Mammary epithelial cell (primary cell): ENCODE measurements at regions of chr3 and their contacts with region 1.

Region 1: GRCh38 chr3:115814778-115815380 is 191.6 kb downstream of the GAP43 start:
- DNase-seq: peak; percentile 60
- H3K4me3 ChIP-seq: no peak overlapping the region
- H3K27ac ChIP-seq: peak overlapping the region; percentile 15
- H3K4me1 ChIP-seq: peaks cover 3% of the 10 kb centered on the region
- H3K27me3 ChIP-seq: no peaks in the 10 kb centered on the region
- CTCF ChIP-seq: peak; percentile 79 to 90

Region 2: DNA sequence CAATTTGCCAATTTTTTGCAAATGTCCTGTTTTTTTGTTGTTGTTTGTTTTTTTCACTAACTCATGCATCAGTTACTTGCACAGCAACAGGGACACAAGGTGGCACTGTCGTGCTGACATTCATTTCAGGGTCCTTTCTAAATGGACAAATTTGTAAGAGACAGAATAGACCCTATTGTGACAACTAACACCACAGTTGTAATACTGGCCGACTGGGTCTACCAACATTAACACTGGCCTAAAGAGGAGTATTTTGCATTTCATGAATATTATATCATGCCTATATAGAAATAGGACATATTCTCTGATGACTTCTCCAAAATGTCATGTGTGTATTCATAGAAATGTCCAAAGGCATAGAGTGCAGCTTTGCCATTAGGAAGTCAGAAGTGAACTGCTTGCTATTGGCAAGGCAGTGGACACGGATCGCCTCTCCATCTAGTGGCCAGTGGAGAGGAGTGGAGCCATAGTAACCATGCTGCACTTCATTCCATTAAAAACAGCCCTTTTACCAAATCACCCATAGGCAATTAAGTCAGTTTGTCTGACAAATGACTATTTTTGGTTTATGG is 722.6 kb before region 1 on chr3:
- CTCF ChIA-PET with region 1: no interaction called
- dilution Hi-C with region 1: no loop called
- in situ Hi-C with region 1: no loop called
- intact Hi-C with region 1: loop called (anchors 1 kb)
- DNase-seq: peak; percentile 39
- H3K4me3 ChIP-seq: no peak overlapping the region
- H3K27ac ChIP-seq: no peak overlapping the region
- H3K4me1 ChIP-seq: peaks cover under 1% of the 10 kb centered on the region
- H3K27me3 ChIP-seq: no peaks in the 10 kb centered on the region
- CTCF ChIP-seq: peak; percentile 68 to 79

Region 3: DNA sequence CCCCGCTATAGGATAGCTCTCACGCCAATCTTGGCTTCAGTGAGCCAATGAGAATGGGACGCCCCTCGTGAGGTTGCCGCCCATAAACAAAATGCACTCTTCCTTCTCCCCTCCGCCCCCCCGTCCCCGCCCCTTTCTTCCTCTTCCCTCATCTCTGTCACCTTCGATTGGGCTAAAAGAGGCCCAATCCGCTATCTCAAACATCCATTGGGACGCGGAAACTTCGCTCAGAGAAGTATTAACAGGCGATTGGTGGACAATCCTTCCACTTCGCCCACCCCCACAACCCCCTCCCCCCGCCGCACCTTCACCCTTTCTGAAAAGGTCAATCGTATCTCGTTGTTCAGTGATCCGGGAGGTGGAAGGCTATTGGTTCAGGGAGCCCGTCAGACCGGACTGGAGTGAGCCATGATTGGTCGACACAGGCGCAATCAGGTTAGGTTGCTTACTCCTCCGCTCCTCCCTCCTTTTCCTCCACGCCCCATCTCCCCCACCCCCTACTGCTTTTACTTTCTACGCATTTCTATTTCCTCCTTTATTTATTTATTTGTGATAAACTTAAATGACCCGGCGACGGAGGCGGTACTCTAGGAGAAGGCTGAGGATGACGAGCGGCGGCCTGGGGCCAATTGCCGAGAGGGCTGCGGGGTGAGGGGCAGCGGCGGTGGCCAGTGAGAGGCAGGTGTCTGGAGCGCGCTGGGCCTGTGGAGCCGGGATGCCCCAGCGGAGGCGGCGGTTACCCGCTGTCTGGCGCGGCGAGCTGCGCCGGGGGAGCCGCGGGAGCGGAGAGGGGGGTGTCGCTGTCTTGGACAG is 667.3 kb before region 1 on chr3:
- CTCF ChIA-PET with region 1: no interaction called
- dilution Hi-C with region 1: no loop called
- in situ Hi-C with region 1: no loop called
- intact Hi-C with region 1: loop called (anchors 2 kb)
- DNase-seq: peak; percentile 100
- H3K4me3 ChIP-seq: peak overlapping the region; percentile 67 to 87 (median 74)
- H3K27ac ChIP-seq: peak overlapping the region; percentile 74
- H3K4me1 ChIP-seq: peaks cover 13% of the 10 kb centered on the region
- H3K27me3 ChIP-seq: no peaks in the 10 kb centered on the region
- CTCF ChIP-seq: no peak

Region 4: GRCh38 chr3:115217678-115218451 is 597.0 kb before region 1 on chr3:
- CTCF ChIA-PET with region 1: interaction called, 3 read pairs
- dilution Hi-C with region 1: no loop called
- in situ Hi-C with region 1: loop called (anchors 10 to 25 kb)
- intact Hi-C with region 1: loop called (anchors 1 kb)
- DNase-seq: peak; percentile 56
- H3K4me3 ChIP-seq: no peak overlapping the region
- H3K27ac ChIP-seq: no peak overlapping the region
- H3K4me1 ChIP-seq: no peaks in the 10 kb centered on the region
- H3K27me3 ChIP-seq: no peaks in the 10 kb centered on the region
- CTCF ChIP-seq: peak; percentile 72

Region 5: DNA sequence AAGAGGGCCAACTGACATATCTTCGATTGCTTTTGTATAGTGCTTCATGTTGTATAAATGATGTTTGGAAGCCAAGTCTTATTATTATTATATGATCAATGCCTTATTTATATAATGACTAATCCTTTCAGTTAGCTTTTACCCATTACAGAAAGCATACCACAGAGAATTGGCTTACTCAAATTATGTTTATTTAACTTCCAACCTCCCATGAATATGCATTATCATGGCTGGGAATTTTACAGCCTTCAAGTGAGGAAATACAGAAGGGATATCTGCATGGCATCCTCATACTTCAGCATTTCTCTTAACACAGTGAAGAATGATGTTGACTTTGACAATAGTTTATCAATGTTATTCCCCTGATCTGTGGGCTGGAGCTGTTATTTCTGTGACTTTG is 417.4 kb before region 1 on chr3:
- CTCF ChIA-PET with region 1: no interaction called
- dilution Hi-C with region 1: no loop called
- in situ Hi-C with region 1: no loop called
- intact Hi-C with region 1: no loop called
- DNase-seq: peak; percentile 8
- H3K4me3 ChIP-seq: no peak overlapping the region
- H3K27ac ChIP-seq: no peak overlapping the region
- H3K4me1 ChIP-seq: peaks cover 11% of the 10 kb centered on the region
- H3K27me3 ChIP-seq: no peaks in the 10 kb centered on the region
- CTCF ChIP-seq: no peak

Region 6: DNA sequence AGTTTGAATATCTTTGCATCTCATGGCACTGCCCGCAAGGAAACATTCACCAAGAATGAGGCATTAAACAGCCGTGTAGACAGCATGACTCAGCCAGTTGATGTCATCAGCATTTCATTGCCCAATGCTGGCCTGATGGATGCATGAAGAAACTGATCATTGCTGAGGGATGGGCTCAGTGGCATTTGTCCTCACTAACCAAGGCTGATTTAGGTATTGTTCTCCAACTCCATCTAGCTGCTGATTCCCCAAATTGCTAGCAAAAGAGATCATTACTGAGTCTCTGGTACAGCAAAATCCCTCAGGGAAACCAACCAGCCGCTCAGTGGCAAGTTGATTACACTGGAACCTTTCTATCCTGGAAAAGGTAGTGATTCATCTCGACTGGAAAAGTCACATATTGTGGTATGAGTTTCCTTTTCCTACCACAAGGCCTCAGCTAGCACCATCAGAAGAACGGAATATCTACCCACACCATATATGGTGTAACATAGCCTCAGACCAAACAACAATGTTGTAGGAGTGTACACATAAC is 378.0 kb before region 1 on chr3:
- CTCF ChIA-PET with region 1: no interaction called
- dilution Hi-C with region 1: no loop called
- in situ Hi-C with region 1: no loop called
- intact Hi-C with region 1: loop called (anchors 2 kb)
- DNase-seq: peak; percentile 97
- H3K4me3 ChIP-seq: no peak overlapping the region
- H3K27ac ChIP-seq: peak overlapping the region; percentile 55
- H3K4me1 ChIP-seq: peaks cover 18% of the 10 kb centered on the region
- H3K27me3 ChIP-seq: no peaks in the 10 kb centered on the region
- CTCF ChIP-seq: peak; percentile 50 to 67

Region 7: DNA sequence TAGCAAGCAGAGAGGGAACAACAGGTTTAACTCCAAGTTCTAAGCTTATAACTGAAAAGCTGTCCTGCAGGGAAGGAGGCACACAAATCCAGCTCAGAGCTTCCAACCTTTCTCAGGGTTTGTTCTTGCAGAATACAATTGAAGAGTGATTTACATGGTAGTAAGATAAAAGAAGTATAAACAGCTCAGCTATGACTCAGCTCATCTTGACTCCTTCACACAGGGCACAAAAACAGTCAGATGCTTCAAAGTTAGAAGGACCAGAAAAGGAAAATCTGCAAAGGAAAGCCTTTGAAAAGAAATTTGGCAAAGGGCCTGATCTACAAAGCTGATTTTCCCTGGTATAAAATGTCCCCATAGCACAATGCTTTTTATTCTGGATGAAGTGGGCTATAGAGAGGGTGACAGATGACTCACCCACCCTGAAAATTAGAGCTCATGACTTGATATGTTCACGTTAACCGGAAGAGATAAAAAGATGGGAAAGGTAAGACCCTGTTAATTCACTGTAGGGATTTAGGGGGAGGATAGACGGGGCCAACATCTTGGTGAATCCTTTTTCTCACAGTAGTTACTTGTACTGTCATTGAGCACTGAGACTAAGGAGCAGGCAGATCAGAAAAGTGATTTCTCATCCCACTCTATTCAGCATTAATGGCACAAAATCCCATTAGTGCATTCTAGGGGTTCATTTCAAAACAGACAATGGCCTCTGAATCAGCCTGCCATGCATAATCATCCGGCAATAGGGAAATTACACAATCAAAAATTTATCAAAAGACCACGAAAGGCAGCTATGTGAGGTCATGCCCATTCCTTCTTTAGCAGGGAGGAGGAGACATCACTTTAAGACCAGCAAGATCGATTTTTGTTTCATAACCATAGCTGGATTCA is 48.0 kb before region 1 on chr3:
- CTCF ChIA-PET with region 1: no interaction called
- dilution Hi-C with region 1: no loop called
- in situ Hi-C with region 1: no loop called
- intact Hi-C with region 1: no loop called
- DNase-seq: peak; percentile 21
- H3K4me3 ChIP-seq: no peak overlapping the region
- H3K27ac ChIP-seq: no peak overlapping the region
- H3K4me1 ChIP-seq: peaks cover 5% of the 10 kb centered on the region
- H3K27me3 ChIP-seq: no peaks in the 10 kb centered on the region
- CTCF ChIP-seq: no peak

Region 8: GRCh38 chr3:115783938-115784738 is 30.7 kb before region 1 on chr3:
- CTCF ChIA-PET with region 1: interaction called, 5 read pairs
- dilution Hi-C with region 1: no loop called
- in situ Hi-C with region 1: no loop called
- intact Hi-C with region 1: loop called (anchors 1 kb)
- DNase-seq: peak; percentile 95
- H3K4me3 ChIP-seq: peak overlapping the region; percentile 41 to 79 (median 48)
- H3K27ac ChIP-seq: peak overlapping the region; percentile 95
- H3K4me1 ChIP-seq: peaks cover 29% of the 10 kb centered on the region
- H3K27me3 ChIP-seq: no peaks in the 10 kb centered on the region
- CTCF ChIP-seq: peak; percentile 94